Activated naive CD4-positive, alpha-beta T cell treated with anti-CD3 and anti-CD28 coated beads for 36 hours (primary cell): ENCODE measurements at regions of chr19 and their contacts with region 1.

Region 1: DNA sequence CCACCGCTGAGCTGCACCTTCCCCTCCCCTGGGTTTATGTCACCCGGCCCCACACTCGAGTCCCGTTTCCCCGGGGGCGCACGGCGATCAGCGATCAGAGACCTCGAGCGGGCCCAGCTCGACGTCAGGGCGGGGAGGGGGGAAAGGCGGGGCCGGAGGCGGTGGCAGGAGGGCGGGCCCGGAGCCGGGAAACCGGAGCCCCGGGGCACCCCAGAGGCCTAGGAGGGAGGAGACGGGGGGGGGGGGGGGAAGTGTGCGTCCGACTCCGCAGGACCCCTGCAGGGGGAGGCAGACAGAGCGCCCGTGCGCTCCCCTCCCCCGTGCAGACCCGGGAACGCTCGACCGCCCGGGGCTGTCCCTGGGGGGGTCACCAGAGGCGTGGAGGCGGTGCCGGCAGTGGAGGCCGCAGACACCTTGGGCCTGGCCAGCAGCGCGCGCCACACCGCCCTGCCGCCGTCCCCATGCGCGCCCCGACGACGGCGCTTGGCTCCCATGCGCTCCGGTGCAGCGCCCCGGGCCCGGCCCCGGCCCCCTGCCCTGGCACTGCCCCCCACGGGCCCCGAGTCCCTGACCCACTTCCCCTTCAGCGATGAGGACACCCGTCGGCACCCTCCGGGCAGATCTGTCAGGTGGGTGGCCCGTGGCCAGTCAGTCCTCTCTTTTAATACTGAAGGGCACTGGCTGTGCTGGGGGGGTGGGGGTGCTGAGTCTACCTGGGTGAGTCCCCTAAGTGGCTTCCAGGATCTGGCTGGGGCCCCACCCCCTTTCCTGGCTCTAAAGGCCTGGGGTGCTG is 11.8 kb downstream of the PDE4A start:
- DNase-seq: peak; percentile 68
- H3K4me3 Mint-ChIP-seq: peak overlapping the region; percentile 72
- H3K27ac Mint-ChIP-seq: no peak overlapping the region
- H3K4me1 Mint-ChIP-seq: peaks cover 38% of the 10 kb centered on the region
- H3K27me3 Mint-ChIP-seq: peaks cover 42% of the 10 kb centered on the region

Region 2: DNA sequence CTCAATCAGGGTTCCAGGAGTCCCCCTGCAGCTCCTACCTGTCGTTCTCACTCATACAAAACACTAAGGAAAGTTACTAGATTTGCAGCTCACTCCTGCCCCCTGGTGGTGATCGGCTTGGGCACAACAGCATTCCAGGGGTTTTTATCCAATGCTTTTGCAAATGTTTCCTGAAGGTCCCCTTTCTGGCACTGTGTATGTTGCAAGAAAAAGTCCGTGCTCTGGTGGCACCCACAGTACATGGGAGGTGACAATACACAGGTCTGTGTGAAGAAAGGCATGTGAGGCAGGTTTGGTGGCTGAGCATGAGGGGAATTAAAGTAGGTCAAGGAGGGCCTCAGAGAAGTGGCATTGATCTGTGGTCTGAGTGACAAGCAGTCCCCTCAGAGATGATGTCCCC is 43.2 kb before region 1 on chr19:
- CTCF ChIA-PET with region 1: interaction called, 5 read pairs
- intact Hi-C with region 1: loop called (anchors 1 kb)
- DNase-seq: peak; percentile 91
- H3K4me3 Mint-ChIP-seq: no peak overlapping the region
- H3K27ac Mint-ChIP-seq: no peak overlapping the region
- H3K4me1 Mint-ChIP-seq: no peaks in the 10 kb centered on the region
- H3K27me3 Mint-ChIP-seq: no peaks in the 10 kb centered on the region

Region 3: GRCh38 chr19:10408511-10409283 is 23.4 kb before region 1 on chr19:
- CTCF ChIA-PET with region 1: interaction called, 65 read pairs
- intact Hi-C with region 1: loop called (anchors 1 kb)
- DNase-seq: peak; percentile 76
- H3K4me3 Mint-ChIP-seq: no peak overlapping the region
- H3K27ac Mint-ChIP-seq: peak overlapping the region; percentile 50
- H3K4me1 Mint-ChIP-seq: peaks cover 63% of the 10 kb centered on the region
- H3K27me3 Mint-ChIP-seq: no peaks in the 10 kb centered on the region

Region 4: DNA sequence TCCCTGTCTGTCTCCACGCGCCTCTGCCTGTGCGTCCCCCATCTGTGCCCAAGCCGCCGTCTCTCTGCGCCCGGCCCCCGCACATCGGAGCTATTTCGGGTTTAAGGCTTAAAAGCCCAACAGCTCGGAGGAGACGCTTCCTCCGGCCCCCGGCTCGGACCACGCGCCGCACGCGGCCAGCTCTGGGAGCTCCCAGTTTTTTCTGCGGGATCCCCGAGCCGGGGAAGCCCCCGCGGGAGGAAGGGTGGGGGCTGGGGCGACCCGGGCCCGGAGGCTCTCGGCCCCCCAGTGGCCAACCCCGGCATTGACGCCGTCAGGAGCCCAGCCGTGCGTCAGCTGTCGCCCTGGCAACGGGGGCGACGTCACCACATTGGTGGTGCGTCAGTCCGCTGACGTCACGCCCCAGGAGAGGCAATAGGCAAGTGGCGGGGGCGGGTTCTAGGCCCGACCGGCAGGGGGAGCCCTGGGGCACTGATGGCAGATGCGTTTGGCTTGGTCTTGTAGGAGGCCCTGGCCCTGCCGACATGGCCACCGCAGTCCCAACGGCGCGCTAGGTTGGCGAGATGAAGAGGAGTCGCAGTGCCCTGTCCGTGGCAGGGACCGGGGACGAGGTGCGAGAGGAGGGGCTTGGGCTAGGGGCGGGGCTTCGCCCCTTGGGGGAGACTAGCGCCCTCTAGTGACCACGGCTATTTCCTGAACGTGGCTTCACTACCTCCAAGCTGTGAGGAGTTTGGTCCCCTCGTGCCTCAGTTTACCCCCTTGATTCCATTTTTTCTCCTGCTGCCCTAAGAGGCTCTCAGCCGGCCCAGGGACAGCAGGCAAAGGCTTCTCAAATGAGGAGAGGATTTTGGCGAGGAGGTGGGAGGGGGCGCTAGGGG is 15.5 kb before region 1 on chr19:
- CTCF ChIA-PET with region 1: interaction called, 65 read pairs
- intact Hi-C with region 1: loop called (anchors 1 kb)
- DNase-seq: peak; percentile 94
- H3K4me3 Mint-ChIP-seq: peak overlapping the region; percentile 75
- H3K27ac Mint-ChIP-seq: peak overlapping the region; percentile 82
- H3K4me1 Mint-ChIP-seq: peaks cover 53% of the 10 kb centered on the region
- H3K27me3 Mint-ChIP-seq: peaks cover 40% of the 10 kb centered on the region